Activated naive CD4-positive, alpha-beta T cell treated with anti-CD3 and anti-CD28 coated beads for 36 hours (primary cell): ENCODE measurements at regions of chr12 and their contacts with region 1.

Region 1: DNA sequence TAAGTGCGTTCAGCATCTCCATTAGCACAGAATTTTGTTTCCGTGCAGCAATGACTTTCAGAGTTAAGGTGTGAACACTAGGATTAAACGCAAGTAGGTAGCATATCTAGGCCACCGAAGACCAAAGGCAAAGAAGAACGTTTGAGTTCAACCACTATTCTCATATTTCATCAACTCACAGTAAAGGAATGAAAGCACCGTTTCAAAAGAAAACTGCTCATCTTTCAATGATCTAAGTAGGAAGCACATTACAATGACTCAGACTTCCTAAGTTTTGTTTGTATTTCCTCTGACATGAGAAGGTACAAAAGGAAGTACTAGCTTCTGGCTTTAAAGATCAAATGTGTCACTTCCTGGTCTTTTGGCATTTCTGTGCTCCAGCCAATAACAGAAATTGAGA is 57.6 kb downstream of the ACADS start:
- DNase-seq: peak; percentile 49
- H3K4me3 Mint-ChIP-seq: no peak overlapping the region
- H3K27ac Mint-ChIP-seq: peak overlapping the region; percentile 53
- H3K4me1 Mint-ChIP-seq: peaks cover 25% of the 10 kb centered on the region
- H3K27me3 Mint-ChIP-seq: no peaks in the 10 kb centered on the region

Region 2: DNA sequence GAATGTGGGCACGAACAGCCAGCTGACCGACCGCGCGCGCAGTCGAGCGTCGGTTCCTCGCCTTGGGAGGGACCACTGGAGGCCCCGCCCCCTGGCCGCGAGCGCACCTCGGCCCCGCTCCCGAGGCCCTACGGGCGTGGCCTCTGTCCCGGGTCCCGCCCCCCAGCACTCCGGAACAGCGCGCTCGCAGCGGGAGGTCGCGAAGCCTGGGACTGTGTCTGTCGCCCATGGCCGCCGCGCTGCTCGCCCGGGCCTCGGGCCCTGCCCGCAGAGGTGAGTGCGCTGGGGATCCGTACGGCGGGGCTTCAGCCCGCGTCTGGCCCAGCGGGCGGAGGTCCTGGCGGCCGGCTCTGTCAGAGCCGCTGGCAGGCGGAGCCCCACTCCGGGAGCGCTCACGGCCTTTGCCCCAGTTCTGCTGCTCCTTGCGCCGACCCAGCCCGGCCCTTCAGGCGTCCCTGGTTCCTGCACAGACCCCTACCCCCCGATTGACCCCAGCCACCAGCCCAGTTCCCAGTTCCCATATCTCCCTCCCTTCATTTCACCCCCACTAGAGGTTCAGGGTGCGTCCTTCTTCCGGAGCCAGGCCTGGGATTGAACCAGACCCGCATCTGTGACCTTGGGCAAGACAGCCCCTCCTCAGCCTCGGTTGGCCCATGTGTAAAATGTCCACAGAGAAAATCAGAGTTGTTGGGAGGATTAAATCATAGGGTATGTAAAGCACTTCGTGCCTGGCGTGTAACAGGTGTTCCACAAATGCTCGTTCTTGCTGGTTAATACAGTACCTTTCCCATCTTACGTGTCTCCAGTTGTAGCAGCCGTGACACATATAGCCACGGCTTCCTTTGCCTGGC is 57.3 kb before region 1 on chr12 and contains the start of gene ACADS:
- CTCF ChIA-PET with region 1: no interaction called
- intact Hi-C with region 1: loop called (anchors 2 kb)
- DNase-seq: peak; percentile 91
- H3K4me3 Mint-ChIP-seq: peak within 1 kb of the TSS; percentile 74
- H3K27ac Mint-ChIP-seq: no peak within 1 kb of the TSS
- H3K4me1 Mint-ChIP-seq: peaks cover 14% of the 10 kb centered on the region
- H3K27me3 Mint-ChIP-seq: no peaks in the 10 kb centered on the region
- total RNA-seq, gene ACADS: 15.4 to 15.8 TPM

Region 3: DNA sequence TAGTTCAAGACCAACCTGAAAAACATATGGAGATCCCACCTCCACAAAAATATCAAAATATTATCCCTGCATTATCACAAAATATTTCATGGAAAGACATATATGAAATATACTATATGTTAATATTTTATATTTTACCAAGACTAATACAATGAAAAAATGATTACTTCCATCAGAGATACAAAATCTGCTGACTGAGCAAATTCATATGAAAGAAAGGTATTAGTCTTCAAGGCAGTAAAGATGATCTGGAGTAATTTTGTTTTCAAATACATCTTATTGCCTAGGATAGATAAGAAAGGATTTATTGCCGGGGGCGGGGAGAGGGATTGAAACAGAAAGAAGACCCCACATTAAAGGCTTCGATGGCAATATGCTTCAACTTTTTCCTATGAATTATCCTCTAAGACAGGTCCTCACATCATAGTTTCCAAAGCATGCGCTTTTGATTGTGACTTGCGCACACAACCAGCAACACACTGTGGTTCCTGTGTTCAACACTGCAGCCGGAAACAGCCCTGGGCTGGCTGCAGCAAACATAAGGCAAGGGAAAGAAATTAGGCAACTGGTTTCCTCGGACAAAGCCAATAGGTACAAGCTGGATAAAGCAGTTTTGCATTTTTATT is 37.8 kb after region 1 on chr12:
- CTCF ChIA-PET with region 1: no interaction called
- intact Hi-C with region 1: loop called (anchors 5 kb)
- DNase-seq: peak; percentile 49
- H3K4me3 Mint-ChIP-seq: peak overlapping the region; percentile 23
- H3K27ac Mint-ChIP-seq: peak overlapping the region; percentile 22
- H3K4me1 Mint-ChIP-seq: peaks cover 44% of the 10 kb centered on the region
- H3K27me3 Mint-ChIP-seq: no peaks in the 10 kb centered on the region

Region 4: GRCh38 chr12:120833849-120834248 is 50.7 kb after region 1 on chr12:
- CTCF ChIA-PET with region 1: no interaction called
- intact Hi-C with region 1: loop called (anchors 1 kb)
- DNase-seq: no peak
- H3K4me3 Mint-ChIP-seq: no peak overlapping the region
- H3K27ac Mint-ChIP-seq: no peak overlapping the region
- H3K4me1 Mint-ChIP-seq: peaks cover 70% of the 10 kb centered on the region
- H3K27me3 Mint-ChIP-seq: no peaks in the 10 kb centered on the region

Region 5: GRCh38 chr12:121015825-121016766 is 232.9 kb after region 1 on chr12 and contains the start of gene C12orf43:
- CTCF ChIA-PET with region 1: no interaction called
- intact Hi-C with region 1: no loop called
- DNase-seq: peak; percentile 98
- H3K4me3 Mint-ChIP-seq: peak within 1 kb of the TSS; percentile 100
- H3K27ac Mint-ChIP-seq: peak within 1 kb of the TSS; percentile 92
- H3K4me1 Mint-ChIP-seq: peaks cover 23% of the 10 kb centered on the region
- H3K27me3 Mint-ChIP-seq: no peaks in the 10 kb centered on the region
- total RNA-seq, gene C12orf43: 14.1 to 15.0 TPM